ENCODE measurements at regions of chr12 and their contacts with region 1.

Region 1: GRCh38 chr12:10033783-10034545 is 3.5 kb downstream of the CLEC9A start:
- DNase-seq: no peak
- H3K4me3 Mint-ChIP-seq: no peak overlapping the region
- H3K27ac Mint-ChIP-seq: no peak overlapping the region
- H3K4me1 Mint-ChIP-seq: no peaks in the 10 kb centered on the region
- H3K27me3 Mint-ChIP-seq: no peaks in the 10 kb centered on the region
- CTCF ChIP-seq: no peak

Region 2: DNA sequence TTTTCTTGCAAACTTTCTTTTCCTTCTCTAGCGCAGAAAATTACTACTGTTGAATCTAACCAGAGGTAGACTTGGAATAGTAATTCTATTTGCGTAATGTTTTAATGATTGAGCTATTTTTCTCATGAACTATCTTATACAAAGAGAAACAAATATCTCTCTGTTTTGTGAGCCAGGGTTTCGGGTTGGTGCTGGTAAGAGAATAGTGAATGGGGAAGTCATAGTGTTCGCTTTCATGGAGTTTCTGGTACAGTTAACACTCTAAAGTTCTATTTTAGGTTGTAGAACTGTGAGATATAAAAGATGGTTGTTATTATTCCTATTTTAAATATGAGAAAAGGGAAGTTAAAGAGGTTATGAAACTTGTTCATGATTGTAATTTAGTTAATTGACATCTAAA is 41.7 kb before region 1 on chr12:
- CTCF ChIA-PET with region 1: no interaction called
- intact Hi-C with region 1: loop called (anchors 1 kb)
- DNase-seq: no peak
- H3K4me3 Mint-ChIP-seq: no peak overlapping the region
- H3K27ac Mint-ChIP-seq: no peak overlapping the region
- H3K4me1 Mint-ChIP-seq: no peaks in the 10 kb centered on the region
- H3K27me3 Mint-ChIP-seq: peaks cover 50% of the 10 kb centered on the region
- CTCF ChIP-seq: no peak

Region 3: GRCh38 chr12:10001171-10001776 is 32.7 kb before region 1 on chr12:
- CTCF ChIA-PET with region 1: no interaction called
- intact Hi-C with region 1: loop called (anchors 1 kb)
- DNase-seq: no peak
- H3K4me3 Mint-ChIP-seq: no peak overlapping the region
- H3K27ac Mint-ChIP-seq: no peak overlapping the region
- H3K4me1 Mint-ChIP-seq: no peaks in the 10 kb centered on the region
- H3K27me3 Mint-ChIP-seq: no peaks in the 10 kb centered on the region
- CTCF ChIP-seq: no peak

Region 4: DNA sequence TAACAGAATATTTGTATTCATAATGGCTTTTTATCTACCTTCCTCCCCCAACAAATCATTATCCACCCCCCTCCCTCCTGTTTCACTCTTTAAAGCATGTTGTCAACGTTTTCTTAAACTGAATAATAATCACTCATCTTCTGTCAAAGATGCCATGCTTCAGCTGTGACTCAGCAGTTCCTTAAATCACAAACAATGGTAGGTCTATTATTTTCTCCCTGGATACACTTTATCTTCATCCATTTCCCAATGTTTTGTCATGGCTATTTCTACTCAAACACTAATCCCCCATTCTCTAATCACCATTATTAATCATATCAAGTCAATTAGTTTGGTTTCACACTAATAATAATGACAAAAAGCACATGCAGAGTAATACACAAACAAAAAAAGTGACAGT is 17.1 kb before region 1 on chr12:
- CTCF ChIA-PET with region 1: no interaction called
- intact Hi-C with region 1: no loop called
- DNase-seq: no peak
- H3K4me3 Mint-ChIP-seq: no peak overlapping the region
- H3K27ac Mint-ChIP-seq: peak overlapping the region; percentile 8
- H3K4me1 Mint-ChIP-seq: peaks cover 20% of the 10 kb centered on the region
- H3K27me3 Mint-ChIP-seq: no peaks in the 10 kb centered on the region
- CTCF ChIP-seq: no peak

Region 5: DNA sequence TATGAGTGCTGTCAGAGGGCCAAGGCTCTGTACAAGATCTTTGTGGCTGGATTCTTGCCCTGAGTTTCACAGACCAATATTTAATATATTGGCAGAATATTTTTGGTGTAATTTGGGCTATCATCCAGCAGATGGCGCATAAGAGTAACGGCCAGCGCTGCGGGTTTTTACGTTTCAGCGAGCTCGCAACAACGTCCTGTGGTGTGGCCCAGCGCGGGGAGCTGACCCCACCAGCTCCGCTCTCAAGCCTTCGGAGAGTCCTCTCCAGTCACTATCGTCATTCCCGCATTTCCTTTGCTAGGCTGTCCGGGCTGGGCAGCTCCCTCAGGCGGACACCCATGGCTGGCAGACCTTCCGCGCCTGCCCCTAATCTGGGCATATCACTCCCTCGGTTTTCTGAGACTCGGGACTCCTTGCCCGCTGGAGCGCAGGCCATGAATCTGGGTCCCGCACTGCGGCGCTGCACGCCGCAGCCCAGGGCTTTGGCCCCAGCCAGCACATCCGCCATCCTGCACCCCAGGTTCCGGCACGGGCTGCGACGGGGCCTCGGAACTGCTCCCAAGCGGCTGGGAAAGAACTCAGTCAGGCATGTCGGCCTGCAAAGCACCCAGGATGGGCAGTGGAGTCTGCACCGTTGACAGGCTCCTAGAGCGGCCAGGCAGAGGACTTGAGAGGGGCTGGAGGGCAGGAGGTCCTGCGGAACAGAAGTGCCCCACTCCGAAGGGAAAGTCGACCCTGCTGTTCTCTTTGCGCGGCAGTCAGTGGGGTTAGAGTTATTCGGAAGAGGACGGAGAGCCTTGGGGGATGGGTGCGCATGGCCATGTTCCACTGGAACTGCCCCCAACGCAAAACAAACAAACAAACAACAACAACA is 119.5 kb after region 1 on chr12:
- CTCF ChIA-PET with region 1: no interaction called
- intact Hi-C with region 1: no loop called
- DNase-seq: peak; percentile 67
- H3K4me3 Mint-ChIP-seq: peak overlapping the region; percentile 95
- H3K27ac Mint-ChIP-seq: peak overlapping the region; percentile 86
- H3K4me1 Mint-ChIP-seq: peaks cover 11% of the 10 kb centered on the region
- H3K27me3 Mint-ChIP-seq: no peaks in the 10 kb centered on the region
- CTCF ChIP-seq: peak; percentile 84

Measured in Calu3 (cell line).